ENCODE measurements at regions of chr10 and their contacts with region 1.

Region 1: GRCh38 chr10:103888113-103888841 is 29.7 kb downstream of the STN1 start:
- DNase-seq: peak in 1 of 2 experiments; percentile 54
- H3K4me3 ChIP-seq: no peak overlapping the region
- H3K27ac ChIP-seq: peak overlapping the region; percentile 99
- H3K4me1 ChIP-seq: peaks cover 55% of the 10 kb centered on the region
- H3K27me3 ChIP-seq: no peaks in the 10 kb centered on the region
- CTCF ChIP-seq: peak; percentile 82

Region 2: GRCh38 chr10:103859161-103860086 is 28.9 kb before region 1 on chr10:
- CTCF ChIA-PET with region 1: no interaction called
- POLR2A ChIA-PET with region 1: no interaction called
- intact Hi-C with region 1: loop called (anchors 2 kb)
- DNase-seq: peak in 1 of 2 experiments; percentile 50
- H3K4me3 ChIP-seq: no peak overlapping the region
- H3K27ac ChIP-seq: no peak overlapping the region
- H3K4me1 ChIP-seq: peaks cover 2% of the 10 kb centered on the region; the same call in 1 of the 2 replicates
- H3K27me3 ChIP-seq: no peaks in the 10 kb centered on the region
- CTCF ChIP-seq: peak; percentile 75

Region 3: DNA sequence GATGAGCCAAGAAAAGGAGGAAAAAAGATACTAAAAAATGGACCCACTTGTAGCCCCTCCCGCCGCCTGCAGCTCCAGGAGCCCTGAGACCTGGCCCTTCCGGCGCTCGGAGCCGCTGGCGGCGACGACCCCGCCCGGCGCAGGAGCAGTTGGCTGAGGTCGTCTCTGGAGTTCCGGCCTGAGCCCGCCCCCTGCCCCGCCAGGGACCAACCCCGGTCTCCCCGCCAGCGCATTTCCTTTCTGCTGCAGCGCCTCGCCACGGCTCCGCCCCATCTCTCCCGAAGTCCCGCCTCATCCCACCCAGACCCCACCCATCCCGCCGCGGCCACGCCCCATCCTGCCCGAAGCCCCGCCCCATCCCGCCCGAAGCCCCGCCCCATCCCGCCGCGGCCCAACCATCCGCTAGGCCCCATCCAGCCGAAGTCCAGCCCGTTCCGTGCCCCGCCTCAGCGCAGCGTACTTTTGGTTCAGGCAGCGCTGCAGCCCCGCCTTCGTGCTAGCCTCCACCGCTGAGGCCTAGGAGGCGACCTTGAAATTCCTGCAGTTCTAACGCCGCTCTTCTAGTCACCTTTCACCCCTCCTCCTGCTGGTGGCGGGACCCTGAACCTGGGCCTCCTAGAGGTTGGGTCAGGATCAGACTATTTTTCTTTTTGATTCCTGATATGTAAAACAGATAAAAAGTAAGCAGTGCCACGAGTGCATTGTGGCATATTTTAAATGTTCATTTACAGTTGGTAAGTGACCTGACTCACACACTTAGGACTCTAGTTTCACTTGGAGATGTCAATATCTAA is 30.0 kb after region 1 on chr10 and contains the start of gene STN1:
- CTCF ChIA-PET with region 1: no interaction called
- POLR2A ChIA-PET with region 1: no interaction called
- intact Hi-C with region 1: loop called (anchors 1 kb)
- DNase-seq: peak; percentile 80 to 94
- H3K4me3 ChIP-seq: peak within 1 kb of the TSS; percentile 87
- H3K27ac ChIP-seq: peak within 1 kb of the TSS; percentile 77
- H3K4me1 ChIP-seq: peaks cover 32% of the 10 kb centered on the region
- H3K27me3 ChIP-seq: no peaks in the 10 kb centered on the region
- CTCF ChIP-seq: no peak
- total RNA-seq, gene STN1: 20.5 and 25.4 TPM in 2 replicates

Region 4: DNA sequence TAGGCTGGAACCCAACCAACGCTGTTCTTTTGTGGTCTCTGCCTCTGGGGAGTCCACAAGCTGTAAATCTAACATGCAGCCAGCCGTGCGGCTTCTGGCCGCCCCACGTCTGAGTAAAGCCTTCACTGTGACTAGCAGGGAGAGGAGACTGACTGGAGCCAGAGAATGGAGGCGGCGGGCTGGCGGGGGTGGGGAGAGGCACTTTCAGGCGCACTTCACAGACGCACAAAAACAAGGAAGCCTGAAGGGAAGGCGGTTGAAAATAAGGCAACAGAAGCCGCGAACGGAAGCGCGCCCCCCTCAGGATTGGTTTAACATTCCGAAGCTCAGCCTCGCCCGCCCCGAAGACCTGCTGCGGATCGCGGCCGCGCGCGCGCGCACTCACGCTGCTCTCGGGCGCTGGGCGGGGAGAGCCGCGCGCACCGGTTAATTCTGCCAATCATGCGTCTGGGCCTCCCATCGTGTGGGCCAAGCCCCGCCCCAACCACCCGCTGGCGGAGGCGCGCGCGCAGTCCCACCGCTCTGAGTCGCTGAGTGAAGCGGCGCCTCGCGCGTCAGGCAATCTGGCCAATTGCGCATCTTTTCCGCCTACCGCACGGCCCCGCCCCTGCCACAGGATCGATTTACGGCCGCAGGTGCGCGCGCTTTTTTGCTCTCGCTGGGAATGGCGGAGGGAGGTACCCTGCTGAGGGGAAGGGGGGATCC is 233.4 kb after region 1 on chr10 and contains the start of gene SFR1:
- CTCF ChIA-PET with region 1: interaction called, 4 read pairs
- POLR2A ChIA-PET with region 1: interaction called, 3 read pairs
- intact Hi-C with region 1: loop called (anchors 1 kb)
- DNase-seq: peak; percentile 90 to 97
- H3K4me3 ChIP-seq: peak within 1 kb of the TSS; percentile 85
- H3K27ac ChIP-seq: peak within 1 kb of the TSS; percentile 97
- H3K4me1 ChIP-seq: peaks cover 45% of the 10 kb centered on the region
- H3K27me3 ChIP-seq: no peaks in the 10 kb centered on the region
- CTCF ChIP-seq: peak; percentile 57
- total RNA-seq, gene SFR1: 4.3 TPM in 2 replicates

Region 5: DNA sequence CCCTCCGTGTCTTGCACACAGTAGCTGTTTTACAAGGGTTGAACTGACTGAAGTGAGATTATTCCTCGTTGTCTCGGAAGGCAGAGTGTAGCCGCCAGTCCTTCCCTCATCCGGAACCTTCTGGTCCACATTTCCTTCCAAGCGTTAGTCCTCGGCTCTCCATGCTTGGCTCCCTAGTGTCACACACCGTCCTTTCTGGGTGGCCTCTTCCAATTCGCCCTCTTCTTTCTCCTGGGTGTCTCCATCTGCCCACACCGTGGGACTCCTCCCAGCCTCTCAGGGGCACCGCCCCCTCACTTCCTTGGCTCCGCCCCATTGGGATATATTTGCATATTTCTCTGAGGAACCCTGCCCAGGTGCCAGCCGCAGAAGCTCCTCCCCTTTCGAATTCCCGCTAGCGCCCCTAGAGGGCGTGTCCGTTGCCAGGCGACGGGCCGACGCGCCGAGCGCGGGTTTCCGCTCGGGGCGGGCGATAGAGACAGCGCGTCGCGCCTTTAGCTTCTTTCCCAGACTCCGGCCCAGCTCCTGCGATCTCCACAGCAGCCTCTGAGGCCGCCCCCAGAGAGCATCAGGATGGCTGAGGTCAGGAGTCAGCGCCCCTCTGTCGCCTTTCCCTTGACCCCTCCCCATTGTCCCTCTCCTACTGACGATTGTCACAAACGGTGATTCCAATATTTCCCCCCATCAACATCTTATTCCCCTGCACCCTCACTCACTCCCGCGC is 465.2 kb after region 1 on chr10 and contains the start of gene CFAP58:
- CTCF ChIA-PET with region 1: no interaction called
- POLR2A ChIA-PET with region 1: no interaction called
- intact Hi-C with region 1: loop called (anchors 5 kb)
- DNase-seq: peak; percentile 48 to 84
- H3K4me3 ChIP-seq: peak within 1 kb of the TSS; percentile 21; the same call in 1 of the 2 replicates
- H3K27ac ChIP-seq: no peak within 1 kb of the TSS
- H3K4me1 ChIP-seq: peaks cover 30% of the 10 kb centered on the region
- H3K27me3 ChIP-seq: peaks cover 3% of the 10 kb centered on the region; the same call in 1 of the 2 replicates
- CTCF ChIP-seq: peak; percentile 62
- total RNA-seq, gene CFAP58: 0.15 and 0.31 TPM in 2 replicates

Measured in PC-9 (cell line).